GM13977 (cell line): ENCODE measurements at regions of chr17 and their contacts with region 1.

Region 1: GRCh38 chr17:11240041-11240801 is 792 bp upstream of the SHISA6 start:
- DNase-seq: no peak
- CTCF ChIP-seq: no peak

Region 2: GRCh38 chr17:11094331-11094730 is 145.9 kb before region 1 on chr17:
- in situ Hi-C with region 1: loop called (anchors 25 kb)
- DNase-seq: no peak
- CTCF ChIP-seq: no peak